ENCODE measurements at regions of chr13 and their contacts with region 1.

Region 1: DNA sequence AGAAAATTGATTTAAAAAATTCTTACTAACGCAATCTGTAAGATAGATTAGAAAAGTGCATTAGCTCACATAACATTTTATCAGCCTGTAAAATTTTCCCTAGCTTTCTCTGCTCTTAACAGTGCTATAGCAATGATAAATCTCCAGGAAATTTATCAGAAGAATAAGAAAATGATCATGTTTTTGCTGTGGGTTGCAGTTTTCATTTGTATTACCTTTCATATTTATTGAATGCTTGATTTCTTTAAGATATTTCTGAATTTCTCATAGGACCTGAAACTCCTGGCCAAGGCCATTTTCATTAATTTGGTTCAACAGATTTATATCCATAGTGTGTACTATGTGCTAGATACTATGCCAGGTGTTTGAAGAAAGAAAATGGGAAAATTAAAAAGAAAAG is 130.3 kb upstream of the STARD13 start:
- DNase-seq: no peak
- ATAC-seq: no peak
- H3K4me3 ChIP-seq: no peak overlapping the region
- H3K27ac ChIP-seq: no peak overlapping the region
- H3K4me1 ChIP-seq: no peaks in the 10 kb centered on the region
- H3K27me3 ChIP-seq: no peaks in the 10 kb centered on the region
- CTCF ChIP-seq: no peak
- POLR2A ChIP-seq: no peak
- RAD21 ChIP-seq: no peak

Region 2: DNA sequence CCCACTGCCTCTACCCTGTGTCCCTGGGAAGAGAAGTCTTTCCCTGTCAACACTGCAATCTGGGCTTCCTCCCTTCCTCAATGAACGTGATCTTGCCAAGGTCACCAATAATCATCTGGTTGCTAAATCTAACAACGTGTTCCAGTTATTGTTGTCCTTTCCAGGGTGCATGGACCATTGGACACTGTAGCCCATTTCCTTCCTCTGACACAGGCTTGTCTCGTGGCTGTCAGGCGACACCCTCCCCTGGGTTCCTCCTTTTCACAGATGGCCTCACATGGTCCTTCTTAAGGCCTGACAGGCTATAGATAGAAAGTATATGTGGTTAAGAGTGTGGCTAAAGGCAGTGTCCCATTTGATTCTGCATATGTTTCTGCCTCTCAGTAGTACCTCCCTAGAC is 62.6 kb before region 1 on chr13:
- CTCF ChIA-PET with region 1: no interaction called
- POLR2A ChIA-PET with region 1: no interaction called
- dilution Hi-C with region 1: no loop called
- in situ Hi-C with region 1: no loop called
- intact Hi-C with region 1: no loop called
- DNase-seq: no peak
- ATAC-seq: no peak
- H3K4me3 ChIP-seq: no peak overlapping the region
- H3K27ac ChIP-seq: no peak overlapping the region
- H3K4me1 ChIP-seq: peaks cover 9% of the 10 kb centered on the region
- H3K27me3 ChIP-seq: no peaks in the 10 kb centered on the region
- CTCF ChIP-seq: no peak
- POLR2A ChIP-seq: no peak
- RAD21 ChIP-seq: no peak

Region 3: GRCh38 chr13:33373624-33374023 is 42.2 kb before region 1 on chr13:
- CTCF ChIA-PET with region 1: no interaction called
- POLR2A ChIA-PET with region 1: no interaction called
- dilution Hi-C with region 1: no loop called
- in situ Hi-C with region 1: no loop called
- intact Hi-C with region 1: loop called (anchors 1 kb)
- DNase-seq: no peak
- ATAC-seq: no peak
- H3K4me3 ChIP-seq: no peak overlapping the region
- H3K27ac ChIP-seq: no peak overlapping the region
- H3K4me1 ChIP-seq: no peaks in the 10 kb centered on the region
- H3K27me3 ChIP-seq: no peaks in the 10 kb centered on the region
- CTCF ChIP-seq: 0 out of 2 replicates have a peak, but pooled peaks have one; percentile 9
- POLR2A ChIP-seq: no peak
- RAD21 ChIP-seq: no peak